Dorsolateral prefrontal cortex (tissue), 120 donors: ENCODE measurements at regions of chr4 and their contacts with region 1.

Region 1: DNA sequence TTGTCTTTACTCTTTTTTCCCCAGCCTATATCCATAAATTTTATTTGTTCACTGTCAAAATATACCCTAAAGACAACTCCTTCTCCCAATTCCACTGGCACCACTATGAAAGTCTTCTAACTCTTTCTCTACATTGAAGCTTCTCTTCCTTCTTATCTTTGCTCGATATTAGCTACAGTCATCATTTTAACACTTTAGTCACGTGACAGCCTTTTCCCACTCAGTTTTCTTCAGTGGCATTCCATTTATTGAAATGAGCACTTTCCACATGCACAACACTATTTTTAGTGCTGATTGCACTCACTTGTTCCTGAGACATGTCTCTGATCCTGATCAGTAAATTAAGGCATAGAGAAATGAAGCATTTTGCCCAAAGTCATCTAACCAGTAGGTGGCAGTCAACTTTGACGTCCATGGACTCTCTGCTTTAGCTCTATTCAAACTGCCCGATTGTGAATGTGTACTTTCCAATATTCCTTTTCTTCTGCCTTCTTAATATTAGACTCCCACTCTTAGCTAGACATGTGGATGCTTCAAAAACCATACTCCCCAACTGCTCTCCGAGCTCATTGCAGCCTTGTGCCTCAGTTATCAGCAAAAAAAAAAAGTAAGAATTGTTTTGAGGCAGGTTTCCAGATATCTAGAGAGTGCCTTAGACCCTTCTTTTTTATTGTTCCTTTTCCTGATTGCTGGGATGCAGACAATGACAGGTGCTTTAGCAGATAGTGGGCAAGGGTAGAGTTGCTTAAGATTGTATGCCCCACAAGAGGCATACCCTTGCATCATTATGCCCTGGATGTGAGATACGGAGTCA is 394.4 kb upstream of the ADGRL3 start:
- DNase-seq: no peak
- H3K4me3 ChIP-seq: no peak overlapping the region
- H3K27ac ChIP-seq: no peak overlapping the region
- H3K27me3 ChIP-seq: no peaks in the 10 kb centered on the region
- CTCF ChIP-seq: peak; percentile 27 to 76 (median 58)

Region 2: DNA sequence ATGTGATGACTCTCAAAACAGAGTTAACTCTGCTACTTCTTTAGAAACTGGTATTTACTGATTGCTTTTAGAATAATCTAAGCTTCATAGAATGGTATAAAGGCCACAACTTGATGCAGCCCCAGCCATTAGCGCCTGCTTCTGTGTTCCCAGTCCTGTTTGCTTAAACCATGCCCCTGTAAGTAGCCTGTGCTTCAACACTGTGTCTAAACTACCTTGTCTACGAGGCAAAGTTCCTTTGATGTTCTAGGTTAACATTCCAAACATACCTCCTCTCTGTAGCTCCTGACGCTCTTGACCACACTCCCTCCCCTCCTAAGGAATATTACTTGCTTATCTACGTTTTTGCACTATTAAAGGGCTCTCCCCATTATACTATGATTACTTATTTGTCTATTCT is 41.9 kb after region 1 on chr4:
- intact Hi-C with region 1: no loop called
- DNase-seq: no peak
- H3K4me3 ChIP-seq: no peak overlapping the region
- H3K27ac ChIP-seq: no peak overlapping the region
- H3K27me3 ChIP-seq: peaks cover 0 to 11% (median 0%) of the 10 kb centered on the region in 45 donors
- CTCF ChIP-seq: no peak

Region 3: DNA sequence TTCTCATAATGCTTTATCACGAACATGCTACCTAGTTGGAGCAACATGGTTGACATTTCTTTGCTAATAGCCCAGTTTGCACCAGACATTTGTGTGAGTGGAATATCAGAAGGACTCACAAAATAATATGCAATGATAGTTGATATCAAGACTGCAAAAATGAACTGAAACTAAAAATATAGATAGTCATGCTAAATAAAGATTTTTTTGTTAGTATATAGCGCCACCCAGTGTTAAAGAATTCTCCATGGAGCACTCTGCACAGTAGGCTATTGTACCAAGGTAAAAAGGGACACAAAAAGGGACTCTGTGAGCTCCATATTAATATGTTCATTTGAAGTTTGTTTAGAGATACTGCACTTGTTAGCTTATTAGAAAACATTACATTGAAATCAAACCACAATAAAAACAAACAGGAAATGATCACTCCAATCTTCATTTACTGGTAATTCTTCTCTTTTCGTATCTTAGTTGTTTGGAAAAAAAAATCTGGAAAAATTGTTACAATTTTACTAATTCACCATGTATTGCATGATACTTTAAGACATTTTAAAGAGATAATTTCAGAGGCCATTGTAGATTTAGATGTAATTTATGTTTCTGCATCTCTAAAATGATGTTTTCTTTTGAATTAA is 1904.0 kb after region 1 on chr4:
- intact Hi-C with region 1: loop called in 1 of 2 experiments (anchors 5 kb)
- DNase-seq: no peak
- H3K4me3 ChIP-seq: peak overlapping the region in 58 of 59 donors; percentile 18 to 65 (median 48)
- H3K27ac ChIP-seq: peak overlapping the region in 10 of 59 donors; percentile 4 to 62 (median 41)
- H3K27me3 ChIP-seq: no peaks in the 10 kb centered on the region
- CTCF ChIP-seq: peak; percentile 59 to 93 (median 80)